ENCODE measurements at regions of chr7 and their contacts with region 1.

Region 1: DNA sequence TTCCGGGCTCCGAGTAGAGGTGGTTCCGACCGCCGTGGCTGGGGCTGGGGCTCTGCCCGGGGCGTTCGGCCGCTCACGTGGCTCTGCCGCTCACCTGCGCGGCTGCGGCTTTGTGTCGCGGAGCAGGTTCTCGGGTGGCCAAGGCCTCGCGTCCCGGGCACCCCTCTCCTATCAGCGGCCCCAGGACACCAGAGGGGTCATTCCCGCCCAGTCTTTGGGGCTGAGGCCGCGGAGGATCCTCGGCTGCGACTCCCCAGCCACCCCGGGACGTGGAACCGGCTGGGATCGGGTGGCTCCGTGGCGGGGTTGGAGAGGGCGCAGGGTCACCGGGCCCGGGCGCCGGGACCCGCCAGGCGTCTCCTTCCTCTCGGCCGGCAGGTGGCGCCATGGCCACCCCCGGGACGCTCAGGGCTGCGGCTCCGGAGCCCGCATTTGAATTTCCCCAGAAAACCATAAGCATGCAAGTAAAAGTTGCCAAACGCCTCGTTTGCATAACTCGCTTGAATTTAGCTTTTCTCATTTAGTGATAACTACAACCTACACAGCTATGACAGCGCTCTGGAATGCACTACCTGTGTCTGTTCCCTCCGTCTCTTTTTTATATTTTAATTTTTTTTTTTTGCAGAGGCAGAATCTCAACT is 1.2 kb downstream of the COL26A1 start:
- DNase-seq: peak; percentile 32 to 79 (median 58)
- H3K4me3 ChIP-seq: peak overlapping the region; percentile 53
- H3K27ac ChIP-seq: peak overlapping the region in 1 of 2 donors; percentile 21
- H3K4me1 ChIP-seq: peaks cover 6% of the 10 kb centered on the region
- H3K27me3 ChIP-seq: no peaks in the 10 kb centered on the region
- CTCF ChIP-seq: peak; percentile 55 to 89 (median 73)
- EP300 ChIP-seq: no peak
- POLR2A ChIP-seq: no peak

Region 2: GRCh38 chr7:100469227-100470044 is 894.4 kb before region 1 on chr7:
- intact Hi-C with region 1: no loop called
- DNase-seq: peak; percentile 88 to 94 (median 92)
- H3K4me3 ChIP-seq: no peak overlapping the region
- H3K27ac ChIP-seq: peak overlapping the region in 1 of 2 donors; percentile 42
- H3K4me1 ChIP-seq: peaks cover 7% of the 10 kb centered on the region
- H3K27me3 ChIP-seq: no peaks in the 10 kb centered on the region
- CTCF ChIP-seq: peak; percentile 90 to 93 (median 92)
- EP300 ChIP-seq: no peak
- POLR2A ChIP-seq: no peak

Region 3: DNA sequence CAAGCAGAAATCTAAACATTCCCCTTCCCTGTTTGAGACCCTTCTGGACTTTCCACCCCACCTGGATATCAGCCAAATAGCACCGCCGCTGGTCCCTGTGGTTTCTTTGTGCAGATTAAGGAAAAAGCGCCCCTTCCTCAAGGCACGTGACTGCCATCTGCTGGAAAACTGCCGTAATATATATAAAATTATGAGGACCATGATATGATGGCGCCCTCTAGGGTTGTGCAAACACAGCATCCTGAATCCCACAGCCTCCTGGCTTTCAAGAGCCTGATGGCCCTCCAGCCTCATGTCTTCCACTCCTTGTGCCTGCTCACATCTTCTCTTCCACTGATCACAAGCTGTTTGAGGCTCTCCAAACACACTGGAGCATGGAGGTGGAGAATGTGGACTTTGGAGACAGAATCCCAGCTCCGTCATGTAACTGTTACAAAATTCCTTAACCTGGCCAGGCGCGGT is 144.0 kb after region 1 on chr7:
- intact Hi-C with region 1: loop called in 1 of 4 experiments (anchors 5 kb)
- DNase-seq: peak in 1 of 5 donors; percentile 26
- H3K4me3 ChIP-seq: no peak overlapping the region
- H3K27ac ChIP-seq: no peak overlapping the region
- H3K4me1 ChIP-seq: no peaks in the 10 kb centered on the region
- H3K27me3 ChIP-seq: no peaks in the 10 kb centered on the region
- CTCF ChIP-seq: peak in 1 of 3 donors; percentile 34
- EP300 ChIP-seq: no peak
- POLR2A ChIP-seq: no peak

Measured in ovary (tissue), 10 donors.